GM12878 (cell line): ENCODE measurements at regions of chr17 and their contacts with region 1.

Region 1: GRCh38 chr17:12472252-12473173 is 193.2 kb upstream of the MYOCD start:
- DNase-seq: no peak
- ATAC-seq: no peak
- H3K4me3 ChIP-seq: no peak overlapping the region
- H3K27ac ChIP-seq: no peak overlapping the region
- H3K4me1 ChIP-seq: no peaks in the 10 kb centered on the region
- H3K27me3 ChIP-seq: no peaks in the 10 kb centered on the region
- CTCF ChIP-seq: no peak
- EP300 ChIP-seq: no peak
- POLR2A ChIP-seq: no peak
- RAD21 ChIP-seq: no peak

Region 2: GRCh38 chr17:12395733-12396354 is 76.7 kb before region 1 on chr17:
- CTCF ChIA-PET with region 1: no interaction called
- POLR2A ChIA-PET with region 1: no interaction called
- RAD21 ChIA-PET with region 1: no interaction called
- SMC1A ChIA-PET with region 1: no interaction called
- in situ Hi-C with region 1: no loop called
- intact Hi-C with region 1: loop called (anchors 2 kb)
- DNase-seq: no peak
- ATAC-seq: peak; percentile 63
- H3K4me3 ChIP-seq: no peak overlapping the region
- H3K27ac ChIP-seq: no peak overlapping the region
- H3K4me1 ChIP-seq: no peaks in the 10 kb centered on the region
- H3K27me3 ChIP-seq: no peaks in the 10 kb centered on the region
- CTCF ChIP-seq: peak; percentile 47 to 63 (median 60)
- EP300 ChIP-seq: no peak
- POLR2A ChIP-seq: no peak
- RAD21 ChIP-seq: peak; percentile 48; the same call in 1 of the 2 replicates